Endothelial cell of umbilical vein (primary cell): ENCODE measurements at regions of chr9 and their contacts with region 1.

Region 1: GRCh38 chr9:132406554-132407122 is at the start of gene TTF1:
- DNase-seq: peak; percentile 88
- H3K4me3 ChIP-seq: peak within 1 kb of the TSS; percentile 49 to 79 (median 58)
- H3K27ac ChIP-seq: peak within 1 kb of the TSS; percentile 61
- H3K4me1 ChIP-seq: peaks cover 20% of the 10 kb centered on the region
- H3K27me3 ChIP-seq: peaks cover 0 to 10% of the 10 kb centered on the region in 2 experiments
- CTCF ChIP-seq: no peak
- POLR2A ChIP-seq: peak; percentile 62
- total RNA-seq, gene TTF1: 12.0 and 13.8 TPM in 2 replicates

Region 2: GRCh38 chr9:132069046-132069898 is 337.4 kb before region 1 on chr9:
- CTCF ChIA-PET with region 1: no interaction called
- POLR2A ChIA-PET with region 1: no interaction called
- dilution Hi-C with region 1: no loop called
- intact Hi-C with region 1: no loop called
- DNase-seq: no peak
- H3K4me3 ChIP-seq: no peak overlapping the region
- H3K27ac ChIP-seq: no peak overlapping the region
- H3K4me1 ChIP-seq: no peaks in the 10 kb centered on the region
- H3K27me3 ChIP-seq: no peaks in the 10 kb centered on the region
- CTCF ChIP-seq: no peak
- POLR2A ChIP-seq: no peak

Region 3: GRCh38 chr9:132354637-132355355 is 51.8 kb before region 1 on chr9 and contains the start of gene SETX:
- CTCF ChIA-PET with region 1: no interaction called
- POLR2A ChIA-PET with region 1: no interaction called
- dilution Hi-C with region 1: no loop called
- intact Hi-C with region 1: loop called (anchors 5 kb)
- DNase-seq: peak; percentile 97
- H3K4me3 ChIP-seq: peak within 1 kb of the TSS; percentile 59 to 84 (median 75)
- H3K27ac ChIP-seq: peak within 1 kb of the TSS; percentile 72
- H3K4me1 ChIP-seq: peaks cover 33% of the 10 kb centered on the region
- H3K27me3 ChIP-seq: no peaks in the 10 kb centered on the region
- CTCF ChIP-seq: no peak
- POLR2A ChIP-seq: peak; percentile 98
- total RNA-seq, gene SETX: 40.2 and 47.7 TPM in 2 replicates

Region 4: GRCh38 chr9:132372177-132373095 is 34.2 kb before region 1 on chr9:
- CTCF ChIA-PET with region 1: interaction called, 4 read pairs
- POLR2A ChIA-PET with region 1: no interaction called
- dilution Hi-C with region 1: no loop called
- intact Hi-C with region 1: loop called (anchors 1 kb)
- DNase-seq: peak; percentile 97
- H3K4me3 ChIP-seq: peak overlapping the region in 1 of 3 experiments; percentile 1
- H3K27ac ChIP-seq: peak overlapping the region; percentile 90
- H3K4me1 ChIP-seq: peaks cover 27% of the 10 kb centered on the region
- H3K27me3 ChIP-seq: no peaks in the 10 kb centered on the region
- CTCF ChIP-seq: no peak
- POLR2A ChIP-seq: no peak

Region 5: GRCh38 chr9:132651254-132651653 is 244.6 kb after region 1 on chr9:
- CTCF ChIA-PET with region 1: interaction called, 5 read pairs
- POLR2A ChIA-PET with region 1: no interaction called
- dilution Hi-C with region 1: no loop called
- intact Hi-C with region 1: loop called (anchors 1 kb)
- DNase-seq: peak; percentile 22
- H3K4me3 ChIP-seq: no peak overlapping the region
- H3K27ac ChIP-seq: no peak overlapping the region
- H3K4me1 ChIP-seq: no peaks in the 10 kb centered on the region
- H3K27me3 ChIP-seq: no peaks in the 10 kb centered on the region
- CTCF ChIP-seq: peak in 1 of 2 donors; percentile 24
- POLR2A ChIP-seq: no peak

Region 6: DNA sequence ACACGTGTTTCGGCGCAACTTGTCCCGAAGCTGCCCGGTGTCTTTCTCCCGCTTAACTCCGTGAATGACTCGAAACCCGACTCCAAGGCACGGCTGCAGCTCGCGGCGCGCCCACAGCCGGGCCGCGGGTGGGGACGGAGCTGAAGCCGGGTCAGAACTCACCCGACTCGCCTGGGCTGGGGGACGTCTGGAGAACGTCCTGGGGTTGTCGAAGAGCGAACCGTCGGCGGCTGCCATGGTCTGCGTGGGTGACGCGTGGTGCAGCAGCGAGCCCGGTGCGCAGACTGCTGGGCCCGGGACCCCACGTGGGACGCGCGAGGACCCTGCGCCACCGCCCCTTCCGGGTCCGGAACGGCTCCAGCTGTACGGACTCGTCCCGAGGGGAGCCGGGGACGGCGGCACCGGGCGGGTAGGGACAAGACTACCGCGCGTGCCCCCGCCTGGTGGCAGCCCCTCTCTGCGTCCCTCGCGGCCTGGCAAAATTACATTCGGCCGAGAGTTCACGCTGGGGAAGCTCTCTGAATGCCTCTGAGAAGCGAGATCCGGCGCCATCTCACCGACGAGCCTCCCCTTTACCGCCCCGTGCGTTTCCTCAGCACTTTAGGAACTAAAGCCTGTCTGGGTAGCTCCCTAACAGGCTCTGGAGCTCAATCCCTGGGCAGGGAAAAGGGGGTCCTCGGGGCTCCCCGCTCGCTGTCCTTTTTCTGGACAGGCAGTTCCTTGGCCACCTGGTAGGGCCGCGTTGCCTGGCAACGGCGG is 263.2 kb after region 1 on chr9 and contains the start of gene DDX31:
- CTCF ChIA-PET with region 1: no interaction called
- POLR2A ChIA-PET with region 1: no interaction called
- dilution Hi-C with region 1: no loop called
- intact Hi-C with region 1: loop called (anchors 5 kb)
- DNase-seq: peak; percentile 78
- H3K4me3 ChIP-seq: peak within 1 kb of the TSS; percentile 74 to 92 (median 78)
- H3K27ac ChIP-seq: peak within 1 kb of the TSS; percentile 90
- H3K4me1 ChIP-seq: peaks cover 21% of the 10 kb centered on the region
- H3K27me3 ChIP-seq: no peaks in the 10 kb centered on the region
- CTCF ChIP-seq: peak in 1 of 2 donors; percentile 3
- POLR2A ChIP-seq: peak; percentile 81
- total RNA-seq, gene DDX31: 16.3 and 16.4 TPM in 2 replicates

Region 7: GRCh38 chr9:132901856-132902831 is 495.5 kb after region 1 on chr9:
- CTCF ChIA-PET with region 1: interaction called, 11 read pairs
- POLR2A ChIA-PET with region 1: no interaction called
- dilution Hi-C with region 1: no loop called
- intact Hi-C with region 1: no loop called
- DNase-seq: peak; percentile 85
- H3K4me3 ChIP-seq: no peak overlapping the region
- H3K27ac ChIP-seq: no peak overlapping the region
- H3K4me1 ChIP-seq: no peaks in the 10 kb centered on the region
- H3K27me3 ChIP-seq: no peaks in the 10 kb centered on the region
- CTCF ChIP-seq: peak; percentile 84 to 97
- POLR2A ChIP-seq: no peak